Esophagus muscularis mucosa (tissue), 4 donors: ENCODE measurements at regions of chr6 and their contacts with region 1.

Region 1: DNA sequence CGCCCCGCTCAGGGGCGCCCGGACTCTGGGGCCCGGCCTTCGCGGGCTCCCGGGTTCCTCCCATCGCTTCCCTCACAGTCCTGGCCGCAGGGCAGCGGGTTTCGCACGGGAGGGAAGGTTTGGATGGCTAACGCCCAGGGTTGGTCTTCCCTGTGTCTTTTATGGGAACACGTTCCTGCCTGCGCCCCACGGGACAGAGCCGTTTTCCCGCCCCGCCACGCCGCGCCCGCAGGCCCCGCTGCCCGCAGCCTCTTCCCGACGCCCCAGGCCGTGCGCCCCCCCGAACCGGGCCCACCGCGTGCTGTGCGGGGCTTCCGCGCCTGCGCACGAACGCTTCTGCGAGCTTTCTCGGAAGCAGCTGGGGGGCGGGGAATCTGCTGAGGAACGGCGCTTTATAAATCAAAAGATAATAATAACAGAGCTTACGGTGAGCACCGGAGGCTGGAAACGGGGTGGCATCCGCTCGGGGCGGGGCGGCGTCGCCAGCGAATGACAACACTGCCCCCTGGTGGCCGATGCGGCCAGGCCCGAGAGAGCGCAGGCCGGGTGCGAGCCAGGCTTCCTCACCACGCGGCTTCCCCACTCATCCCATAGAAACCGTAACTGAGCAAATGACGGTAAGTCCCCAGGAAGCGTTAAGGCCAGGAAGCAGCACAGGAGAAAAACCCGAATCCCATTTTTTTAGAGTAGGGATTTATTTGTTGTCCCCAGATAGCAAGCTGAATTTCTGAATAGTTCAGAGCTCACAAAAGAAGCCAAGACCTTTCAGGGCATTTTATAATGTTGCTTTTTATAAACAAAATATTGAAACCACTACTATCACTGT is 116.4 kb downstream of the MYLK4 start:
- DNase-seq: peak; percentile 97
- H3K4me3 ChIP-seq: peak overlapping the region; percentile 54 to 62 (median 60)
- H3K27ac ChIP-seq: peak overlapping the region; percentile 80 to 88 (median 82)
- H3K4me1 ChIP-seq: peaks cover 18 to 46% (median 35%) of the 10 kb centered on the region in 4 donors
- H3K27me3 ChIP-seq: no peaks in the 10 kb centered on the region
- CTCF ChIP-seq: peak in 2 of 3 experiments; percentile 93 to 99
- EP300 ChIP-seq: peak; percentile 54
- POLR2A ChIP-seq: no peak

Region 2: GRCh38 chr6:1596088-1596852 is 1038.1 kb before region 1 on chr6:
- intact Hi-C with region 1: loop called (anchors 2 kb)
- DNase-seq: no peak
- H3K4me3 ChIP-seq: peak overlapping the region in 3 of 4 donors; percentile 8 to 47 (median 25)
- H3K27ac ChIP-seq: no peak overlapping the region
- H3K4me1 ChIP-seq: peaks cover 6 to 10% (median 8%) of the 10 kb centered on the region in 4 donors
- H3K27me3 ChIP-seq: peaks cover 0 to 47% (median 7%) of the 10 kb centered on the region in 4 donors
- CTCF ChIP-seq: peak; percentile 93 to 96 (median 94)
- EP300 ChIP-seq: no peak
- POLR2A ChIP-seq: no peak

Region 3: GRCh38 chr6:2196079-2196679 is 438.2 kb before region 1 on chr6:
- intact Hi-C with region 1: loop called (anchors 10 kb)
- DNase-seq: no peak
- H3K4me3 ChIP-seq: no peak overlapping the region
- H3K27ac ChIP-seq: no peak overlapping the region
- H3K4me1 ChIP-seq: peaks cover 0 to 9% (median 7%) of the 10 kb centered on the region in 4 donors
- H3K27me3 ChIP-seq: no peaks in the 10 kb centered on the region
- CTCF ChIP-seq: peak; percentile 81 to 83 (median 81)
- EP300 ChIP-seq: no peak
- POLR2A ChIP-seq: no peak

Region 4: DNA sequence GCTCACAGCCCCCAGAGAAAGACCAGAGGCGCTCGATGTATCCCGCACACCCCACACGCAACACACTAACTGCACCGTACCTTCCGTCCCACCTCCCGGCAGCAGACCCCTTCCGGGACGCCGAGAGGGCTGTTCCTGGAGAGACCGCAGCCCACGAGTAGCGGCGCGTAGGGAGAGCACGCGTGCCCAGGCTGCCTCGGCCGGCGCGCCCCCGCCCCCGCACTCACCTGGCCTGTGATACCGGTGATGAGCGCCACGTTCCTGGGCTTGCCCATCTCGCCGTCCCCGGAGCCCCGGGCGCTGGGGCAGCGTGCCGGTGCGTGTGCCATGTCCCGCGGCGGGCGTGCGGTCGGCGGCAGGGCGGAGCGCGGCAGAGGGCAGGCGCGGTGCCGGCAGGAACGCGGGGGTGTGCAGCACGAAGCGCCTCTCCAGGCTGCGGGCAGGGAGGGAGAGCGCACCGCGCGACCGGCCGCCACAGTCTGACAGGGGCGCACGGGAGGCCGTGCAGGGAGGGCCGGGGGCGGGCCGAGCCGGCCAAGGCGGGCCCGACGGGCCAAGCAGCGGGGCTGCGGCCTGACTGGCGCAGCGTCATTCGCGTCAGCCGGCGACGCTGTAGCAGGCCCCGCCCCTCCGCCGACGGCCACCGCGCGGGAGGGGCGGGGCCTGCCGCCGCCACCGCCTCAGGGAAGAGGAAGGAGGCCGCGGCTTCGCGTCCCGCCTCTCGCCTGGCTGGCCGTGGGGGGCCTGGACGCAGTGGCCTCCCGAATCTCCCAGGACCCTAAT is 389.1 kb before region 1 on chr6 and contains the start of gene GMDS:
- intact Hi-C with region 1: loop called (anchors 2 kb)
- DNase-seq: peak; percentile 93
- H3K4me3 ChIP-seq: peak within 1 kb of the TSS; percentile 80 to 98 (median 86)
- H3K27ac ChIP-seq: peak within 1 kb of the TSS; percentile 84 to 91 (median 89)
- H3K4me1 ChIP-seq: peaks cover 14 to 24% (median 22%) of the 10 kb centered on the region in 4 donors
- H3K27me3 ChIP-seq: no peaks in the 10 kb centered on the region
- CTCF ChIP-seq: no peak
- EP300 ChIP-seq: no peak
- POLR2A ChIP-seq: peak; percentile 50
- total RNA-seq, gene GMDS: 3.6 to 14.1 (median 6.0) TPM

Region 5: DNA sequence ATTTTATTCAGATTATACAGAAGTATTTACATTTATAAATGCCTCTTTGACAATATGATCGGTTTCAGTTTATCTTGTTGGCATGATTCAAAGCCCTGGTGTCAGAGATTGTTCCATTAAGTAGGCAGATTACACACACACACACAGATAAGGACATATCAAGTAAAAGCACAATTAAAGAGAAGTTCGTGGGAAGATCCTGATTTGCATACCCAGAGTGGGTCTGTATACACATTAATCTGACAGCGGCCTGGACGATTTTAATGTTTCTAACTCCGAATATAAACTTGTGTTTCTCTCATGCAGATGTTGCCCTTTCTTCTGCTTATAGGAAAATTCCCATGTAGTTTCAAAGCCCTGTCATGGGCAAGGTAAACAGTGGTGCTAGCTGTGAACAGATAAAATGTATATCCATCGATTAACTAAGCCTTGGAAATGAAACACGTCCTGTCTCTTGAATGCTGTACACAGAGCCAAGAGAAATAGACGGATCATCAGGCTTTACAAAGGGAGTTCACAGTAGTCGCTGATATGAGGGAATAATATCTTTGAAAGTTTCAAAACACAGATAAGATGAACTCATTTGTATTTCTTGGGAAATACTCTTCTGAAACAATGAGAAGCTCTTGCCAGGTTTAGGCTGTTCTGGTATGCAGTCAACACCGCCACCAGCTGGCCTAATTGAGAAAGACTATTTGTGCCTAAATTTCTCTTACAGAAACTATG is 280.8 kb before region 1 on chr6:
- intact Hi-C with region 1: loop called (anchors 10 kb)
- DNase-seq: no peak
- H3K4me3 ChIP-seq: no peak overlapping the region
- H3K27ac ChIP-seq: peak overlapping the region in 2 of 4 donors; percentile 1 to 12
- H3K4me1 ChIP-seq: peaks cover 6 to 15% (median 10%) of the 10 kb centered on the region in 4 donors
- H3K27me3 ChIP-seq: no peaks in the 10 kb centered on the region
- CTCF ChIP-seq: peak; percentile 78 to 81 (median 80)
- EP300 ChIP-seq: no peak
- POLR2A ChIP-seq: no peak

Region 6: GRCh38 chr6:2448820-2449571 is 185.4 kb before region 1 on chr6:
- intact Hi-C with region 1: loop called (anchors 5 kb)
- DNase-seq: no peak
- H3K4me3 ChIP-seq: peak overlapping the region; percentile 11 to 49 (median 34)
- H3K27ac ChIP-seq: no peak overlapping the region
- H3K4me1 ChIP-seq: peaks cover 6 to 19% (median 9%) of the 10 kb centered on the region in 4 donors
- H3K27me3 ChIP-seq: no peaks in the 10 kb centered on the region
- CTCF ChIP-seq: peak; percentile 53 to 73 (median 68)
- EP300 ChIP-seq: no peak
- POLR2A ChIP-seq: no peak